Caco-2 (cell line): ENCODE measurements at regions of chr17 and their contacts with region 1.

Region 1: DNA sequence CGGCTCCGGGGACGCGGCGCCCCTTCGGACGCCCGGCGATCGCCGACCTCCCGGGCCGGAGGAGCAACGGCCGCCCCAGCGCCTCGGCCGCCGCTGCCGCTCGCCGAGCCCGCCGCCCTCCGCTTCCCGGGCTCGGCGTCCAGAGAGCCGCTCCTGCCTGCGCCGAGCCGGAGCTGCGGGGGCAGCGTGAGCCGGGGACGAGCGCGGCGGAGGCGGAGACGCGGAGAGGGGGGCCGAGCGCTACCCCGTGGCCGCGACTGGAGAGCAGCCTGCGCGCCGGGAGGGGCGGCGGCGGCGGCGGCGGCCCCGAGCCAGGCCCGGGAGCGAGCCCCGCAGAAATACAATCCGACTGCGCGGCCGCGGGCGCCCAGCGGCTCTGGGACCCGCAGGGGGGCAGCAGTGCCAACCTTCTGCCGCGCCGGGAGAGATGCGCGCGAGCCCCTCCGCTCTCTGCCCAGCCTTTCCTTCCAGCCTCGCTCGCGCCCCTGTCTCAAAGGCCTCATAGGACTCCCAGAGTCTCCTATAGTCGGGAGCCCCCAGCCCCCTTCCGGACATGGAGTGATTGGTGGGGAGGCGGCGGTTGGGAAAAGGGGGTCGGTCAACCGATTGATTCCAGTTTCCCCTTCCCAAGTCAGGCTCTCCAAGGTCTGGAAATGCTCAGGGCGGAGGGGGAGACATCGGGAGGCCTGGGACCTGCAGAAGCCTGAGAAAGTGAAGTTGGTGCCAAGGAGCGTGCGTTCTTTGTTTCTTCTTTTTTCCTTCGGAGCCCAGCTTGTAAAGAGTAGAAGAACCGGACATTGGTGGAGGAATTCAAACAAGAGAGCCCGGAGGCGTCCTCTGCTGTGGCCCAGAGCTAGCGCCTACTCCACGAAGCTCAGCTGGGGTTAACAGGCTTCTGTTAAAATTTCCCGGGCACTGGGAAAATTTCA is 1.1 kb upstream of the SDK2 start:
- DNase-seq: peak in 1 of 2 experiments; percentile 48
- H3K4me3 ChIP-seq: peak overlapping the region; percentile 22
- H3K4me3 Mint-ChIP-seq: peak overlapping the region; percentile 77
- H3K27ac Mint-ChIP-seq: no peak overlapping the region
- H3K4me1 ChIP-seq: 0 out of 2 replicates have a peak, but pooled peaks cover 9% of the 10 kb centered on the region
- H3K4me1 Mint-ChIP-seq: peaks cover 5% of the 10 kb centered on the region
- H3K27me3 ChIP-seq: peaks cover 6% of the 10 kb centered on the region
- H3K27me3 Mint-ChIP-seq: peaks cover 49% of the 10 kb centered on the region
- CTCF ChIP-seq: peak in 1 of 2 experiments; percentile 2

Region 2: DNA sequence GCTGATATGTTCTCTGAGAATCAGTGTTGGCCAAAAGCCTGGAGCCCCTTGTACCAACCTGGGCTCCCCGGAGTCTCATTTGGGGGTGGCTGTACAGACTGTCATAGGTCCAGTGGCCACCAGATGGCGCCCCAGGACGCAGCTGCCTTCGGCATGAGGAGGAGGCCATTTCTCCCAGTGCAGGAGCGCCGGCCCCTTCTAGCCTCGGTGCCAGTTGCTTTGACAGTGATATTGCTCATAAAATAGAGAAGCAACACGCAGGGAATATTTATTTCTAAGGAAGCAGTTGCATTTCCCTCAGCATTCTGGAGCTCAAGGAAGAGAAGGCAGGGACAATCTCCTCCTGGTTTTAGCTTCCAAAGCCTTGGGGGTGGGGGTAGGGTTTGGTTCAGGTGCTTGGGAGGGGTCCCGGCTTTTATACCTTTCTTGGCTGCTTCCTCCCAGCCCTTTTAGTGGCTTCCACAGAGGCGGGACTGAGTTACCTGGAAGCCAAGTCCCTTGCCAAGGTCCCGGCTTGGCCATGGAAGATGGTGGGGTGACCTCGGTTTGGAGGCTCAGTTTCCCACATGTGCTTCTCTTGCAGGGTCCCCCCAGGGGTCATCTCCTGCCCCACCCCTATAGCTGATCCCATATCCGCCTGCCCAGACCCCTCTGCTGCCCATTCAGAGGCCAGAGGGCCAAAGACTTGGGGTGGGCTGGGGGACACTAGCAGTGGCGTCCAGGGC is 215.7 kb before region 1 on chr17:
- CTCF ChIA-PET with region 1: no interaction called
- POLR2A ChIA-PET with region 1: no interaction called
- intact Hi-C with region 1: loop called (anchors 5 kb)
- DNase-seq: peak; percentile 78 to 85
- H3K4me3 ChIP-seq: no peak overlapping the region
- H3K4me3 Mint-ChIP-seq: no peak overlapping the region
- H3K27ac Mint-ChIP-seq: no peak overlapping the region
- H3K4me1 ChIP-seq: no peaks in the 10 kb centered on the region
- H3K4me1 Mint-ChIP-seq: no peaks in the 10 kb centered on the region
- H3K27me3 ChIP-seq: no peaks in the 10 kb centered on the region; the same call in 1 of the 2 replicates
- H3K27me3 Mint-ChIP-seq: peaks cover 9% of the 10 kb centered on the region
- CTCF ChIP-seq: peak; percentile 93 to 97

Region 3: GRCh38 chr17:73841431-73842060 is 196.2 kb after region 1 on chr17:
- CTCF ChIA-PET with region 1: interaction called, 3 read pairs
- POLR2A ChIA-PET with region 1: no interaction called
- intact Hi-C with region 1: loop called (anchors 2 kb)
- DNase-seq: peak in 1 of 2 experiments; percentile 36
- H3K4me3 ChIP-seq: no peak overlapping the region
- H3K4me3 Mint-ChIP-seq: no peak overlapping the region
- H3K27ac Mint-ChIP-seq: no peak overlapping the region
- H3K4me1 ChIP-seq: no peaks in the 10 kb centered on the region
- H3K4me1 Mint-ChIP-seq: no peaks in the 10 kb centered on the region
- H3K27me3 ChIP-seq: no peaks in the 10 kb centered on the region
- H3K27me3 Mint-ChIP-seq: peaks cover 6% of the 10 kb centered on the region
- CTCF ChIP-seq: peak; percentile 49 to 71

Region 4: GRCh38 chr17:73991254-73991653 is 345.9 kb after region 1 on chr17:
- CTCF ChIA-PET with region 1: no interaction called
- POLR2A ChIA-PET with region 1: no interaction called
- intact Hi-C with region 1: loop called (anchors 5 kb)
- DNase-seq: peak; percentile 48 to 62
- H3K4me3 ChIP-seq: no peak overlapping the region
- H3K4me3 Mint-ChIP-seq: no peak overlapping the region
- H3K27ac Mint-ChIP-seq: no peak overlapping the region
- H3K4me1 ChIP-seq: peaks cover 8% of the 10 kb centered on the region; the same call in 1 of the 2 replicates
- H3K4me1 Mint-ChIP-seq: peaks cover 7% of the 10 kb centered on the region
- H3K27me3 ChIP-seq: no peaks in the 10 kb centered on the region
- H3K27me3 Mint-ChIP-seq: no peaks in the 10 kb centered on the region
- CTCF ChIP-seq: no peak